MCF 10A (cell line): ENCODE measurements at regions of chr1 and their contacts with region 1.

Region 1: GRCh38 chr1:60281360-60281932 is 207.9 kb upstream of the C1orf87 start:
- DNase-seq: peak; percentile 85
- H3K4me3 Mint-ChIP-seq: no peak overlapping the region
- H3K27ac Mint-ChIP-seq: no peak overlapping the region
- H3K4me1 Mint-ChIP-seq: peaks cover 17% of the 10 kb centered on the region
- H3K27me3 Mint-ChIP-seq: no peaks in the 10 kb centered on the region
- CTCF ChIP-seq: peak; percentile 94

Region 2: GRCh38 chr1:60298290-60298689 is 16.8 kb after region 1 on chr1:
- CTCF ChIA-PET with region 1: interaction called, 13 read pairs
- POLR2A ChIA-PET with region 1: no interaction called
- intact Hi-C with region 1: no loop called
- DNase-seq: no peak
- H3K4me3 Mint-ChIP-seq: no peak overlapping the region
- H3K27ac Mint-ChIP-seq: no peak overlapping the region
- H3K4me1 Mint-ChIP-seq: no peaks in the 10 kb centered on the region
- H3K27me3 Mint-ChIP-seq: peaks cover 100% of the 10 kb centered on the region
- CTCF ChIP-seq: no peak

Region 3: DNA sequence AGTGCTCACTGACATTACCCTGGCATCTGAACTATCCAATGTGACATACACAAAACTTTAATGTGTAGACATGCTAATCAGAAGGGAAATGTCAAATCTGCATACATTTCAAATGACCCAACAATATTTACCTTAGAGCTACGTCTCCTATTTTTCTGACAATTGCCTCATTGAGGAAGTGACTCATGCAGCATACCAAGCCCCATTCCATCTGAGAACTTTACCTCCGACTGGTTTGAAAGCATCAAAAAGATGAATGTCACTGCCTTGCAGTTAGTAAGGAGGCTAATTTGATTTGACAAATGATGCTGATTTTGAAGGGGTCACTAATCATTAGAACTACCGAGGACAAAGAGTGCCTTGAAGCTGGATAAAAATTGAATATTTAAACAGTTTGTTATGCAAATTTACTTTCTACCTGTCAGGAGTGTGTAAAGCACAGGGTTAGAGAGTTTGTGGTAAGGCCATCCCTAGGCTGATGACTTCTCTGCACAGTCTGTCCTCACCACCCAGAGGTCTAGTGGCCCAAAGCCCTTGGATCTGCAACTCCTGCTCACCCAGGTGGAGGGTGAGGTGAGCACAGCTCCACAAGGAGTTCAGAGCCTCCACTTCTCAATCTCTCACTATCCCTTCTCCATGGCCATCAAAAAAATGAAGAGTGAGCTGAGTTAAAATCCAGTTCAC is 292.4 kb after region 1 on chr1:
- CTCF ChIA-PET with region 1: no interaction called
- POLR2A ChIA-PET with region 1: no interaction called
- intact Hi-C with region 1: no loop called
- DNase-seq: peak; percentile 83
- H3K4me3 Mint-ChIP-seq: peak overlapping the region; percentile 1
- H3K27ac Mint-ChIP-seq: peak overlapping the region; percentile 91
- H3K4me1 Mint-ChIP-seq: peaks cover 43% of the 10 kb centered on the region
- H3K27me3 Mint-ChIP-seq: no peaks in the 10 kb centered on the region
- CTCF ChIP-seq: no peak

Region 4: GRCh38 chr1:60739729-60740128 is 458.3 kb after region 1 on chr1:
- CTCF ChIA-PET with region 1: interaction called, 11 read pairs
- POLR2A ChIA-PET with region 1: interaction called, 3 read pairs
- intact Hi-C with region 1: no loop called
- DNase-seq: no peak
- H3K4me3 Mint-ChIP-seq: no peak overlapping the region
- H3K27ac Mint-ChIP-seq: no peak overlapping the region
- H3K4me1 Mint-ChIP-seq: no peaks in the 10 kb centered on the region
- H3K27me3 Mint-ChIP-seq: no peaks in the 10 kb centered on the region
- CTCF ChIP-seq: no peak

Region 5: GRCh38 chr1:60765204-60765603 is 483.8 kb after region 1 on chr1:
- CTCF ChIA-PET with region 1: interaction called, 82 read pairs
- POLR2A ChIA-PET with region 1: interaction called, 3 read pairs
- intact Hi-C with region 1: loop called (anchors 1 kb)
- DNase-seq: peak; percentile 57
- H3K4me3 Mint-ChIP-seq: no peak overlapping the region
- H3K27ac Mint-ChIP-seq: no peak overlapping the region
- H3K4me1 Mint-ChIP-seq: peaks cover 4% of the 10 kb centered on the region
- H3K27me3 Mint-ChIP-seq: peaks cover 23% of the 10 kb centered on the region
- CTCF ChIP-seq: peak; percentile 71

Region 6: DNA sequence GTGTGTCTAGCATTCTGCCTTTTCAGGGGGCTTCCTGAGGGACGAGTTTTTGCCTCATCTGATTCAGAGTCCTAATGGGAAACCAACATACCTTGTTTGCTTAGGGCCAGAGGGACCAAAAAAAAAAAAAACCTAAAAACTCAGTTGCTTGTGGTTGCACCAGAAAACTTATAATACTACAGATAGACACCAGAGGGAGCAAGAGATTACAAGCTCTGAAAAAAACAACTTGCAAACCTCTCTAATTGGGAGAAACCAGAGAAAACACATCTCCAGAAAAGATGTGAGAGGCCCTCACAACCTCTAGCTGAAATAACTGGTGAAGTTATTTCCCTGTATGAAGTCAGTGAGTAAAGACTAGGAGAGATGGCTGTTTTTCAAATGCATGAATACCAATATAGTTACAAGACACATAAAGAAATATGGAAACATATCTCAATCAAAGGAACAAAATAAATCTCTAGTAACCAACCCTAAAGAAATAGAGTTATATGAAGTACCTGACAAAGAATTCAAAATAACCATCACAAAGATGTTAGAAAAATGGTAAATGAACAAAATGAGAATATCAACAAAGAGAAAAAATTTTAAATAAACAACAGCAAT is 567.2 kb after region 1 on chr1:
- CTCF ChIA-PET with region 1: interaction called, 12 read pairs
- POLR2A ChIA-PET with region 1: no interaction called
- intact Hi-C with region 1: loop called (anchors 2 kb)
- DNase-seq: peak; percentile 38
- H3K4me3 Mint-ChIP-seq: no peak overlapping the region
- H3K27ac Mint-ChIP-seq: no peak overlapping the region
- H3K4me1 Mint-ChIP-seq: peaks cover 13% of the 10 kb centered on the region
- H3K27me3 Mint-ChIP-seq: peaks cover 20% of the 10 kb centered on the region
- CTCF ChIP-seq: peak; percentile 71

Region 7: DNA sequence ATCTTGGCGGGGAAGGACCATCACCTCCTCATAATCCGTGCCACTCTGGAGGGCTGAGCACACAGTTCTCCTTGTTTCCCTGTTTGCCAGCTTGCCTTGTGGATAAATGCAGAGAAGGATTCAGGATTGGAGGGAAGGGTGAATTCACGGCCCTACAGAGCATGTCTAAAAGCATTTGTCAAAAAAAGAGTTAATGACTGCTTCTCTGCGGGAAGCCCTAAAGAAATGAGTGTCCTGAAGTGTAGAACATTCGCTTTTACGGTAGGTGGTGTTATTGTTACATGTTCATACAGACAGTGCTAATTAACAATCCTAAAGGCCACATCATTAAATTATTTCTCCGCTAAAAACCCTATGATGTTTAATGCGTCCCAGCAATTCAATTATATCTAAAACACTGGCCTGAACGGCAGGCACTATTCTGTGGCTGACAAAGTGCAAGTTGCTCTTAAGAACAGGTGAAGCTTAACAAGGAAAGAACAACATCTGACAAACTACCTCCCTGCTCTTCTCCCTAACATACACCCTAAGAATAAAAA is 688.6 kb after region 1 on chr1:
- CTCF ChIA-PET with region 1: no interaction called
- POLR2A ChIA-PET with region 1: no interaction called
- intact Hi-C with region 1: loop called (anchors 2 kb)
- DNase-seq: peak; percentile 43
- H3K4me3 Mint-ChIP-seq: no peak overlapping the region
- H3K27ac Mint-ChIP-seq: no peak overlapping the region
- H3K4me1 Mint-ChIP-seq: peaks cover 18% of the 10 kb centered on the region
- H3K27me3 Mint-ChIP-seq: no peaks in the 10 kb centered on the region
- CTCF ChIP-seq: peak; percentile 46